ENCODE measurements at regions of chr3 and their contacts with region 1.

Region 1: DNA sequence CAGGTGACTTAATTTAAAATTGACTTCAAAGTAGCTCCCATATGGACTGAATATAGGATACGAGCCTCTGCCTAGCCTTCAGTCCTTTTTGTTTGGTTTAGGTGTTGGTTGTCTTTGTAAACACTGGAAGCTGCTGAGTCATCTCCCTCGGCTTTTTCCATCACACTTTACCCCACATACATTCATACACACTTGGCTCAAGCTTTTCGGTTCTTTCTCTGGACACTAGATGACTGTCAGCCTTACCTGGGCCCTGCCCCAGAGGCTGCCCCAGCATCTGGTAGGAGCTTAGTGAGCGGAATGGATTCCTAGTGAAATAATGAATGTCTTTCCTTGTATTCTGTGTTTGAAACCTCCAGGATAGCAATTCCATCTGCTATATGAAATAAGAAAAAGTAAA is 201.4 kb upstream of the IL12A start:
- DNase-seq: peak; percentile 82 to 98
- H3K4me3 ChIP-seq: peak overlapping the region; percentile 30; the same call in 1 of the 2 replicates
- H3K27ac ChIP-seq: peak overlapping the region; percentile 90
- H3K4me1 ChIP-seq: peaks cover 64% of the 10 kb centered on the region
- H3K27me3 ChIP-seq: no peaks in the 10 kb centered on the region
- CTCF ChIP-seq: no peak

Region 2: DNA sequence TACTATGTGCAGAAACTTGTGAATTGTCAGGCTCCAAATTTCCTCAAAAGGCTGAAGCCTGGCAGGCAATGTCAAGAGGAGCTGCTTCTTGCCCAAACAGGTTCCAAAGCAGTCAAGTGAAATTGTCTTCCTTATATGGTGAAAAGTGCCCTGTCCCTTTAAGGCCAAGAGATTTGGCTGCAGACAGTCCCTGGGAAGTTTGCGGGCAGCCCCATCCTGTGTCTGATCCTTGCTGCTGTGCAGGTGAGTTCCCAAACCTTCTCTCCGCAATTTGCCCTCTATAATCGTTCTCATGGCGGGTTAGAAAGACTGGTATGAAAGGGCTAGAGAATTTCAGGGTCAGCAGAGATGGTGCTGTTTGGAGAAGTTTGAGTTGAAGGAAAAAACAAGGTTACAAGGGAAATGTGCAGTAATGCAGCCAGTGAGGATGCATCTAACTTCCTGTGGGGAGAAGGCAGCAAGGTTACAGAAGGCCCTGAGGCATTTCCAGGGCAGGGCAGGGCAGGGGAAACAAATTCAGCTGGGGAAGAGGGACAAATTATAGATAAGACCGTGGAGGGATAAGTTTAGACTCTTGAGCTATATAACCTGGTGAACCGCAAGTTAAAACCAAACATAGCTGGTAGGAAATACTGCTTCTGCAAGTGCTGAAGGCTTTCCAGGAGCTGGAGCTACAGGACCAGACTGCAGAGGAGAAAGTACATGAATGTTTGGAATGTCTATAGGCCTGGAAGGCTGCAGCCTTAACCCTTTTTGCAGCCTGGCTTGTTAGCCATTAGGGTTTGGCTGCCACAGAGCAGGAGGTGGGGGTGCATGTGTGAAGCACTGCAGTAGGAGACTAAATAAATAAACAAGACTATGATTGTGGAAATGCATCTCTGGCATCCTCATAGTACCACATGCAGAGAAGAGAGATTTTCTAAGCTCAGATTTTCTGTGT is 54.7 kb before region 1 on chr3:
- CTCF ChIA-PET with region 1: interaction called, 5 read pairs
- POLR2A ChIA-PET with region 1: no interaction called
- intact Hi-C with region 1: loop called (anchors 1 kb)
- DNase-seq: peak; percentile 69 to 73
- H3K4me3 ChIP-seq: peak overlapping the region; percentile 38; the same call in 1 of the 2 replicates
- H3K27ac ChIP-seq: no peak overlapping the region
- H3K4me1 ChIP-seq: peaks cover 23% of the 10 kb centered on the region
- H3K27me3 ChIP-seq: no peaks in the 10 kb centered on the region
- CTCF ChIP-seq: no peak

Region 3: GRCh38 chr3:159798951-159799350 is 11.8 kb after region 1 on chr3:
- CTCF ChIA-PET with region 1: interaction called, 18 read pairs
- POLR2A ChIA-PET with region 1: interaction called, 11 read pairs
- intact Hi-C with region 1: no loop called
- DNase-seq: peak in 1 of 2 experiments; percentile 84
- H3K4me3 ChIP-seq: no peak overlapping the region
- H3K27ac ChIP-seq: peak overlapping the region; percentile 13; the same call in 1 of the 2 replicates
- H3K4me1 ChIP-seq: peaks cover 15% of the 10 kb centered on the region
- H3K27me3 ChIP-seq: no peaks in the 10 kb centered on the region
- CTCF ChIP-seq: no peak

Region 4: GRCh38 chr3:159813822-159814523 is 26.8 kb after region 1 on chr3:
- CTCF ChIA-PET with region 1: no interaction called
- POLR2A ChIA-PET with region 1: no interaction called
- intact Hi-C with region 1: loop called (anchors 2 kb)
- DNase-seq: peak; percentile 79 to 97
- H3K4me3 ChIP-seq: 0 out of 2 replicates have a peak overlapping the region, but pooled peaks have one; percentile 18
- H3K27ac ChIP-seq: peak overlapping the region; percentile 52
- H3K4me1 ChIP-seq: peaks cover 51% of the 10 kb centered on the region
- H3K27me3 ChIP-seq: no peaks in the 10 kb centered on the region
- CTCF ChIP-seq: no peak

Measured in PC-9 (cell line).